Activated CD4-positive, alpha-beta memory T cell treated with anti-CD3 and anti-CD28 coated beads for 36 hours (primary cell): ENCODE measurements at regions of chr1 and their contacts with region 1.

Region 1: GRCh38 chr1:54052934-54053744 is at the starts of genes TCEANC2 and TMEM59:
- DNase-seq: peak; percentile 99
- H3K4me3 Mint-ChIP-seq: no peak within 1 kb of the TSS
- H3K27ac Mint-ChIP-seq: no peak within 1 kb of the TSS
- H3K4me1 Mint-ChIP-seq: peaks cover 30% of the 10 kb centered on the region
- H3K27me3 Mint-ChIP-seq: no peaks in the 10 kb centered on the region
- total RNA-seq, gene TCEANC2: 12.8 to 13.6 TPM
- total RNA-seq, gene TMEM59: 142 to 149 TPM

Region 2: DNA sequence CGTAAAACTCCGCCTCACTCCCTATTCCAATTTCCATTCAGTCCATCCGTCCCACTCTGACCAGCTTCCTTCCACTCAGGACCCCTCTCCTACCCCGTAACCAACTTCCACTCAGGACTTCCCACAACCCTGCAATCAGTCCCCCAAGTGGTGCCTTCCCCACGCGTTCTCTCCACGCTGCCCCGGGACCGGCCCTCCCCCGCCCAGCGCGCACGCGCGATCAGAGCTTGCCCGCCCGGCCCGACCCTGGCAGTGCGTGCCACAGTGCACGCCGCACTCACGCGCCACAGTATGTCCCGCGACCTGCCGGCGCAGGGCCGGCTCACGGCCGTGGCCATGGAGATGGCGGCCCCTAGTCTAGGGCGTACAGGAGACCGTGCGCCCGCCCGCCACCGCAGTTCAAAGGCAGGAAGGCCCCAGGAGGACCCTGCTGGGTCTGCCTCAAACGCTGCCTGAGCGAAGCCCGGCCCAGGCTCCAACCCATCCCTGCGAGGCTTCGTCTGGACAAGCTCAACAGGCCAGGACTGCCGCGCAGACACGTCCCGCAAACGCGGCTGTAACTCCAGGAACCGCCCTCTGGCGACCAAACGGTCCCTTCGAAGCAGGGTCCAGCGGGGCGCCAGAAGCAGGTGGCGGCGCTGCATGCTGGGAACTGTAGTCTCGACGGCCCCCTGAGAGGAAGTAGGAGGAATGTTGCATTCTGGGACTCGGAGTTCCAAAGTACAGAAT is 215.1 kb before region 1 on chr1 and contains the start of gene NDC1:
- CTCF ChIA-PET with region 1: no interaction called
- POLR2A ChIA-PET with region 1: interaction called, 8 read pairs
- intact Hi-C with region 1: loop called (anchors 1 kb)
- DNase-seq: peak; percentile 91
- H3K4me3 Mint-ChIP-seq: peak within 1 kb of the TSS; percentile 90
- H3K27ac Mint-ChIP-seq: peak within 1 kb of the TSS; percentile 96
- H3K4me1 Mint-ChIP-seq: peaks cover 23% of the 10 kb centered on the region
- H3K27me3 Mint-ChIP-seq: peaks cover 2% of the 10 kb centered on the region
- total RNA-seq, gene NDC1: 29.6 to 32.0 TPM

Region 3: GRCh38 chr1:53945433-53946251 is 107.5 kb before region 1 on chr1 and contains the start of gene IFT25:
- CTCF ChIA-PET with region 1: interaction called, 9 read pairs
- POLR2A ChIA-PET with region 1: interaction called, 5 read pairs
- intact Hi-C with region 1: loop called (anchors 1 kb)
- DNase-seq: peak; percentile 99
- H3K4me3 Mint-ChIP-seq: peak within 1 kb of the TSS; percentile 92
- H3K27ac Mint-ChIP-seq: peak within 1 kb of the TSS; percentile 90
- H3K4me1 Mint-ChIP-seq: peaks cover 48% of the 10 kb centered on the region
- H3K27me3 Mint-ChIP-seq: no peaks in the 10 kb centered on the region
- total RNA-seq, gene IFT25: 52.5 to 60.3 TPM

Region 4: DNA sequence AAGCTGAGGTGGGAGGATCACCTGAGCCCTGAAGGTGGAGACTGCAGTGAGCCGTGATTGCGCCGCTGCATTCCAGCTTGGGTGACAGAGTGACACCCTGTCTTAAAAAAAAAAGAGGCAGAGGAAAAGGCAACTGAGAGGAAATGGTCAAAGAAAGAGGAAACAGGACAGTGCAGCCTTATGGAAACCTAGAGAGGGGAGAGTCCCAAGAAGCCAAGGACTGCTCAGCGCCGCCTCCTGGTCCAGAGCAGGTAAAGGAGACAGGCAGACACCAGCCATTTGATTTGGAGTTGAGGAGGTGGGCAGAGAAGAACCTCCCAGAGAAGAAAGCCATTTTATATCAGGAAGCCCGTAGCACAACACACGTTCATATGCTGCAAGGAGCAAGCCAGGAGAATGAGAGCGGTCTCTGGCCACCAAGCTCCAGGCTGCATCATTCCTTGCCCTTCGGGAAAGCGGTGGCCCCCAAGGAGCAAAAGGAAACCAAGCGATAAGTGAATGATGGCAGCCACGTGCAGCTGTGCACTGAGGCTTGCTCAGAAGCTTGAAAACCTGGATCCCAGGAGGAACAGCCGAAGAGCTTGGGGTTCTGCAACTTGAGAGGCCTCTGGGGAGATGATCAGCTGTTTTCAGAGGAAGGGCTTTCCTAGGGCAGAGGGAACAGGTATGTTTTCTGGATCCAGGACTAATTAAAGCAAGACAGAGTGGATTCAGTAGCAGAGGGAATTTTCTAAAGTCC is 73.3 kb before region 1 on chr1:
- CTCF ChIA-PET with region 1: no interaction called
- POLR2A ChIA-PET with region 1: no interaction called
- intact Hi-C with region 1: no loop called
- DNase-seq: no peak
- H3K4me3 Mint-ChIP-seq: no peak overlapping the region
- H3K27ac Mint-ChIP-seq: no peak overlapping the region
- H3K4me1 Mint-ChIP-seq: no peaks in the 10 kb centered on the region
- H3K27me3 Mint-ChIP-seq: no peaks in the 10 kb centered on the region

Region 5: DNA sequence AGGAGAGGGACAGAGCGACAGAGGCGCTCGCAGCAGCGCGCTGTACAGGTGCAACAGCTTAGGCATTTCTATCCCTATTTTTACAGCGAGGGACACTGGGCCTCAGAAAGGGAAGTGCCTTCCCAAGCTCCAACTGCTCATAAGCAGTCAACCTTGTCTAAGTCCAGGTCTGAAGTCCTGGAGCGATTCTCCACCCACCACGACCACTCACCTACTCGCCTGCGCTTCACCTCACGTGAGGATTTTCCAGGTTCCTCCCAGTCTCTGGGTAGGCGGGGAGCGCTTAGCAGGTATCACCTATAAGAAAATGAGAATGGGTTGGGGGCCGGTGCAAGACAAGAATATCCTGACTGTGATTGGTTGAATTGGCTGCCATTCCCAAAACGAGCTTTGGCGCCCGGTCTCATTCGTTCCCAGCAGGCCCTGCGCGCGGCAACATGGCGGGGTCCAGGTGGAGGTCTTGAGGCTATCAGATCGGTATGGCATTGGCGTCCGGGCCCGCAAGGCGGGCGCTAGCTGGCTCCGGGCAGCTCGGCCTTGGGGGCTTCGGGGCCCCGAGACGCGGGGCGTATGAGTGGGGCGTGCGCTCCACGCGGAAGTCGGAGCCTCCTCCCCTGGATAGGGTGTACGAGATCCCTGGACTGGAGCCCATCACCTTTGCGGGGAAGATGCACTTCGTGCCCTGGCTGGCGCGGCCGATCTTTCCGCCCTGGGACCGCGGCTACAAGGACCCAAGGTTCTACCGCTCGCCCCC is 146.8 kb after region 1 on chr1 and contains the starts of genes CYB5RL and MRPL37:
- CTCF ChIA-PET with region 1: no interaction called
- POLR2A ChIA-PET with region 1: interaction called, 4 read pairs
- intact Hi-C with region 1: loop called (anchors 1 kb)
- DNase-seq: peak; percentile 94
- H3K4me3 Mint-ChIP-seq: peak within 1 kb of the TSS; percentile 90
- H3K27ac Mint-ChIP-seq: peak within 1 kb of the TSS; percentile 75
- H3K4me1 Mint-ChIP-seq: peaks cover 29% of the 10 kb centered on the region
- H3K27me3 Mint-ChIP-seq: no peaks in the 10 kb centered on the region
- total RNA-seq, gene CYB5RL: 12.8 to 13.0 TPM
- total RNA-seq, gene MRPL37: 157 to 166 TPM

Region 6: DNA sequence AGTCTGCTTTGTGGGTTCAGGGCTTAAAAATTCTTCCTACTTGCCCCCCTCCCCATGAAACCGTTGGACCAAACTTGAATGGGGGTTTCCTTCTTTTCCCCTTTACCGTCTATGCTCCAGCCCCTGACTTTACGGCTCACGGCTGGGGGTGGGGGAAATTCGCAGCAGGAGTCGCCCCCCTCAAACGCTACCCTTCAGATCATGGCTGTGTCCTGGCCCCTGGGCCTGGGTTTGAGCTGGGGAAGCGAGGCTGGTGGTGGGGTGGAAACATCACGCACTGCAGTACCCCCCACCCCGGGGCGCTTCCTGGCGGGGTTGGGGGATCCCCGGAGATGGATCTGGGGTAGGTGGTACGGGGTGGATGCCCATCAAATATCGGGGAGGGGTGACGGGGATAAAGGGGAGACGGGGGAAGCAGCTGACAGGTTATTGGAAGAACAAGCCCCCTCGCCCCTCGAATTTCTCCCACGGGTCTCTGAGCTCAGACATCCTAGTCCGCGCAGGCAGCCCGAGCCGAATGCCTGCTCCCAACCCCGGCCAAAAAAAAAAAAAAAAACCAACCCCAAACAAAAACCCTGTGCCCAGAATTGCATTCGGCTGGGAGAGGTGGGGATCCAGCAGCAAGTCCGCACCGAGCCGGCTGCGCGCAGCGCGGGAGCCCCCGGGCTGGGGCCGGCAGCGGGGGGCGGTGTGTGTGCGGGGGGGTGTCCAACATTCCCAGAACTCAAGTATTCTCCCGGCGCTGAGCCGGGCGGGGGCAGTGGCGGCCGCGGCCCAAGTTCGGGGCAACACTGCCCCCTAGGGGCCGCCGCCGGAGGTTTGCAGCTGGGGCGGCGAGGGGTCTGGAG is 435.9 kb after region 1 on chr1:
- CTCF ChIA-PET with region 1: interaction called, 3 read pairs
- POLR2A ChIA-PET with region 1: no interaction called
- intact Hi-C with region 1: loop called (anchors 5 kb)
- DNase-seq: peak; percentile 76
- H3K4me3 Mint-ChIP-seq: peak overlapping the region; percentile 81
- H3K27ac Mint-ChIP-seq: peak overlapping the region; percentile 47
- H3K4me1 Mint-ChIP-seq: peaks cover 27% of the 10 kb centered on the region
- H3K27me3 Mint-ChIP-seq: peaks cover 6% of the 10 kb centered on the region

Region 7: GRCh38 chr1:54764133-54764921 is 711.2 kb after region 1 on chr1 and contains the start of gene PARS2:
- CTCF ChIA-PET with region 1: no interaction called
- POLR2A ChIA-PET with region 1: no interaction called
- intact Hi-C with region 1: loop called (anchors 1 kb)
- DNase-seq: peak; percentile 97
- H3K4me3 Mint-ChIP-seq: peak within 1 kb of the TSS; percentile 93
- H3K27ac Mint-ChIP-seq: peak within 1 kb of the TSS; percentile 78
- H3K4me1 Mint-ChIP-seq: peaks cover 12% of the 10 kb centered on the region
- H3K27me3 Mint-ChIP-seq: no peaks in the 10 kb centered on the region
- total RNA-seq, gene PARS2: 5.6 to 5.7 TPM

Region 8: DNA sequence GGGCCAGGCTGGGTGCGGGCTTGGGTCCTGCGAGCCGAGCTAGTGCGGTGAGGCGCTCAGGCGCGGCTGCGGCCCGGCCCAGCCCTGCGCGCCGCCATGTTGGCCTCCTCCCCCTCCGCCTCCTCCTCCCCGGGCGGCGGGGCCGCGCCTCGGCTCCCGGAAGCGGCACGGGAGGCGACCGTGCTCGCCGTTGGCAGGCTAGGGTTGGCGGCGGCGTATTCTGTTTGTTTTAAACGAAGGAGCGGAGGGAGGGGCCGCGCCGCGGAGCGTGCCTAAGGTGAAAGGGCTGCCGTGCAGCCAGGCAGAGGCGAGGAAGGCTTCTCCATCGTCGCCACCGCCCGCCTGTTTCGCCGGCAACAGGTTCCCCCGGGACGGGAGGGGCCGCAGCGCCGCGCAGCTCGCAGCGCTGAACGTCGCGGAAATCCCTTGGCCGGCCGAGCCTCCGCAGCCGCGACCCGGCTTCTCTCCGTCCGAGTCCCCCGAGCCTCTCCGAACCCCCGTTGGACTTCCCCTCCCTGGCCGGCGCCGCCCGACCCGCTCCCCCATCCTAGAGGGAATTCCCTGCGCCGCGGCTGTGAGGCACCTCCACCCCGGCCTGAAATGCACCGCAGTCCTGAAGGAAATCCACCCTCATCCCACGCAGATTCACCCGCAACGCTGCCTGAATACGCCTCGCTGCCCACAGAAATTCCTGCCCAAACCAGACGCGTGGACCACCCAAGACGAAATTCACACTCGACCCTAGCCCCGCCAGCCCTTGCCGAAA is 1162.3 kb after region 1 on chr1 and contains the start of gene USP24:
- CTCF ChIA-PET with region 1: no interaction called
- POLR2A ChIA-PET with region 1: no interaction called
- intact Hi-C with region 1: loop called (anchors 5 kb)
- DNase-seq: peak; percentile 85
- H3K4me3 Mint-ChIP-seq: peak within 1 kb of the TSS; percentile 94
- H3K27ac Mint-ChIP-seq: peak within 1 kb of the TSS; percentile 94
- H3K4me1 Mint-ChIP-seq: peaks cover 52% of the 10 kb centered on the region
- H3K27me3 Mint-ChIP-seq: no peaks in the 10 kb centered on the region
- total RNA-seq, gene USP24: 37.4 to 39.9 TPM